CD4-positive, alpha-beta memory T cell (primary cell): ENCODE measurements at regions of chr9 and their contacts with region 1.

Region 1: GRCh38 chr9:77977210-77977611 is 54.4 kb downstream of the GNAQ start:
- DNase-seq: peak in 4 of 5 donors; percentile 37 to 53 (median 48)
- H3K4me3 ChIP-seq: peak overlapping the region in 1 of 2 donors; percentile 21
- H3K4me3 Mint-ChIP-seq: peak overlapping the region in 7 of 8 donors; percentile 3 to 73 (median 62)
- H3K27ac ChIP-seq: no peak overlapping the region
- H3K27ac Mint-ChIP-seq: peak overlapping the region; percentile 1 to 92 (median 43)
- H3K4me1 ChIP-seq: peaks cover 53% of the 10 kb centered on the region
- H3K4me1 Mint-ChIP-seq: peaks cover 42 to 73% (median 58%) of the 10 kb centered on the region in 4 donors
- H3K27me3 ChIP-seq: no peaks in the 10 kb centered on the region
- H3K27me3 Mint-ChIP-seq: no peaks in the 10 kb centered on the region

Region 2: DNA sequence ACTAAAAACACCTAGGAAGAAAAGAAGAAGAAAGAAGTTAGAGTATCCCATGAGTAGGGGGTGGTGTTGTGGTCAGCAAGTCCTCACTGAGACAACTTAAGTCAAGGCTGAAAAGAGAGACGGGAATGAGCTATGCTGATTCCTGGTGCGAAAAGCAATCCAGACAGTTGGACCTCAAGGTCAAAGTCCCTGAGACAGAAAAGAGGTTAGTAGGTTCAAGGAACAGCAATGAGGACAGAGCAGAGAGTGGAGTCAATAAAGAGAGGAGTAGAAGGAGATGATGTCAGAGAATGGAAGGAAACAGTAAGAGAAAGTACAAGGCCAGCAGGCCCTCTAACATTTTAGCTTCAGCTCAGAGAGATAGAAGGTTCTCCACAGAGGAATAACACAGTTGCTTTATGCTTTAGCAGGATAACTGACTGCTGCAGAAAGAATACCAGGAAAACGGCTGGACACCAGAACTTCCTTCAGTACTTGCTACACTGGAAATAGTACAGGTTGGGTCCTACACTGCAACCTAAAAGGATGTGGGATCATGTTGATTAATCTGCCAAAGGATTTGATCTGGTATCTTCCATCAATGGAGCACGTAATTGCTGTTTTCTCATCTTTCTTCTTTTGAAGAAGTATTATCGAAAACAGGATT is 10.8 kb after region 1 on chr9:
- CTCF ChIA-PET with region 1: interaction called, 20 read pairs
- POLR2A ChIA-PET with region 1: no interaction called
- intact Hi-C with region 1: no loop called
- DNase-seq: no peak
- H3K4me3 ChIP-seq: no peak overlapping the region
- H3K4me3 Mint-ChIP-seq: no peak overlapping the region
- H3K27ac ChIP-seq: no peak overlapping the region
- H3K27ac Mint-ChIP-seq: peak overlapping the region in 5 of 7 donors; percentile 2 to 80 (median 48)
- H3K4me1 ChIP-seq: peaks cover 13% of the 10 kb centered on the region
- H3K4me1 Mint-ChIP-seq: peaks cover 41 to 72% (median 50%) of the 10 kb centered on the region in 4 donors
- H3K27me3 ChIP-seq: no peaks in the 10 kb centered on the region
- H3K27me3 Mint-ChIP-seq: no peaks in the 10 kb centered on the region

Region 3: GRCh38 chr9:78053627-78054026 is 76.4 kb after region 1 on chr9:
- CTCF ChIA-PET with region 1: interaction called, 21 read pairs
- POLR2A ChIA-PET with region 1: no interaction called
- intact Hi-C with region 1: no loop called
- DNase-seq: no peak
- H3K4me3 ChIP-seq: no peak overlapping the region
- H3K4me3 Mint-ChIP-seq: peak overlapping the region in 6 of 8 donors; percentile 20 to 82 (median 68)
- H3K27ac ChIP-seq: no peak overlapping the region
- H3K27ac Mint-ChIP-seq: peak overlapping the region in 3 of 7 donors; percentile 35 to 77 (median 67)
- H3K4me1 ChIP-seq: peaks cover 20% of the 10 kb centered on the region
- H3K4me1 Mint-ChIP-seq: peaks cover 14 to 32% (median 23%) of the 10 kb centered on the region in 4 donors
- H3K27me3 ChIP-seq: no peaks in the 10 kb centered on the region
- H3K27me3 Mint-ChIP-seq: no peaks in the 10 kb centered on the region

Region 4: GRCh38 chr9:78121488-78121887 is 144.3 kb after region 1 on chr9:
- CTCF ChIA-PET with region 1: interaction called, 119 read pairs
- POLR2A ChIA-PET with region 1: interaction called, 14 read pairs
- intact Hi-C with region 1: loop called (anchors 1 kb)
- DNase-seq: peak in 4 of 5 donors; percentile 44 to 56 (median 48)
- H3K4me3 ChIP-seq: no peak overlapping the region
- H3K4me3 Mint-ChIP-seq: no peak overlapping the region
- H3K27ac ChIP-seq: no peak overlapping the region
- H3K27ac Mint-ChIP-seq: peak overlapping the region; percentile 58 to 82 (median 69)
- H3K4me1 ChIP-seq: peaks cover 36% of the 10 kb centered on the region
- H3K4me1 Mint-ChIP-seq: peaks cover 30 to 53% (median 42%) of the 10 kb centered on the region in 4 donors
- H3K27me3 ChIP-seq: no peaks in the 10 kb centered on the region
- H3K27me3 Mint-ChIP-seq: no peaks in the 10 kb centered on the region

Region 5: GRCh38 chr9:78158286-78158685 is 181.1 kb after region 1 on chr9:
- CTCF ChIA-PET with region 1: no interaction called
- POLR2A ChIA-PET with region 1: no interaction called
- intact Hi-C with region 1: no loop called
- DNase-seq: no peak
- H3K4me3 ChIP-seq: no peak overlapping the region
- H3K4me3 Mint-ChIP-seq: no peak overlapping the region
- H3K27ac ChIP-seq: no peak overlapping the region
- H3K27ac Mint-ChIP-seq: no peak overlapping the region
- H3K4me1 ChIP-seq: no peaks in the 10 kb centered on the region
- H3K4me1 Mint-ChIP-seq: no peaks in the 10 kb centered on the region
- H3K27me3 ChIP-seq: no peaks in the 10 kb centered on the region
- H3K27me3 Mint-ChIP-seq: peaks cover 0 to 11% of the 10 kb centered on the region in 2 donors

Region 6: GRCh38 chr9:78213712-78214111 is 236.5 kb after region 1 on chr9:
- CTCF ChIA-PET with region 1: interaction called, 52 read pairs
- POLR2A ChIA-PET with region 1: interaction called, 4 read pairs
- intact Hi-C with region 1: loop called (anchors 1 kb)
- DNase-seq: peak in 4 of 5 donors; percentile 29 to 44 (median 38)
- H3K4me3 ChIP-seq: no peak overlapping the region
- H3K4me3 Mint-ChIP-seq: peak overlapping the region in 4 of 8 donors; percentile 21 to 56 (median 44)
- H3K27ac ChIP-seq: no peak overlapping the region
- H3K27ac Mint-ChIP-seq: peak overlapping the region in 3 of 7 donors; percentile 30 to 65 (median 44)
- H3K4me1 ChIP-seq: peaks cover 37% of the 10 kb centered on the region
- H3K4me1 Mint-ChIP-seq: peaks cover 32 to 47% (median 37%) of the 10 kb centered on the region in 4 donors
- H3K27me3 ChIP-seq: no peaks in the 10 kb centered on the region
- H3K27me3 Mint-ChIP-seq: no peaks in the 10 kb centered on the region